ENCODE measurements at regions of chrX and their contacts with region 1.

Region 1: GRCh38 chrX:154490414-154491083 is at the start of gene SLC10A3:
- DNase-seq: peak; percentile 74
- H3K4me3 ChIP-seq: peak within 1 kb of the TSS; percentile 67
- H3K27ac ChIP-seq: peak within 1 kb of the TSS; percentile 93
- H3K27me3 ChIP-seq: no peaks in the 10 kb centered on the region
- CTCF ChIP-seq: no peak
- polyA plus RNA-seq, gene SLC10A3: 10.1 and 13.8 TPM in 2 replicates

Region 2: DNA sequence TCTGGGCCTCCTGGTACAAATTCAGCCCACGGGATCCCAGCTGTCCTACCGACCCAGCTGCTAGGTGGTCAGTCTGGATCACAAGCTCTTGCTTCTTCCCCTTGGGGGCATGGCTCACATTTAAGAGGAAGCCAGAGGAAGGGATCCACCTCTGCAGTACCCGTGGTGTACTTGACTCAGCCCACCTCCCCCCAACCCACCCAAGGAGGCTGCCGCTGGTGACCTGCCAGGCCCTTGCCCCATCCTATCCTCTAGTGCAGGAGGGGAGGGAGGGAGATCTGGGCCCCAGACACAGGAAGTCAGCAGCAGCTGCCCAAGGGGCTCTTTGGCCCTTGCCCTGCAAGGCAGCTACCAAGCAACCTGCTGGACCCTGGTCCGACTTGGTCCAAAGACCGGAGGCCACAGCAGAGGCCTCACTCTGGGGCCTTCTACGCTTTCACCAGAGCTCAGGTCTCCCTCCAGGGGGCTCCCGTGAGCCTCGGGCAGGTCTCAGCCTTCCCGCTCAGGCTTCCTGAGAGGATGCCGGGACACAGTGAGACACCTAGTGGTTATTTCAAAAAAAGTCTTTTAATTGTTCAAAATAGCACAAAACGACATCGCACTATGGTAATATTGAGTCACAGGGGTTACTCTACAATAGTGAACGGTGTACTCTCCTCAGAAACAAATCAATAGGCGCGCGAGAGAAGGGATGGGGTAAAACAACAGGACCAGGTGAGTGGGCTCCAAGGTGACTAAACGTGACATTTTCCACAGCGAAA is 543.4 kb before region 1 on chrX:
- CTCF ChIA-PET with region 1: no interaction called
- POLR2A ChIA-PET with region 1: no interaction called
- DNase-seq: peak; percentile 41
- H3K4me3 ChIP-seq: no peak overlapping the region
- H3K27ac ChIP-seq: no peak overlapping the region
- H3K27me3 ChIP-seq: no peaks in the 10 kb centered on the region
- CTCF ChIP-seq: peak; percentile 89

Region 3: GRCh38 chrX:154478728-154479622 is 11.6 kb before region 1 on chrX and contains the start of gene LAGE3:
- CTCF ChIA-PET with region 1: no interaction called
- POLR2A ChIA-PET with region 1: interaction called, 11 read pairs
- DNase-seq: peak; percentile 69
- H3K4me3 ChIP-seq: peak within 1 kb of the TSS; percentile 61
- H3K27ac ChIP-seq: no peak within 1 kb of the TSS
- H3K27me3 ChIP-seq: no peaks in the 10 kb centered on the region
- CTCF ChIP-seq: no peak
- polyA plus RNA-seq, gene LAGE3: 9.3 and 13.2 TPM in 2 replicates

Region 4: GRCh38 chrX:154515878-154516655 is 25.5 kb after region 1 on chrX and contains the start of gene FAM3A:
- CTCF ChIA-PET with region 1: no interaction called
- POLR2A ChIA-PET with region 1: interaction called, 12 read pairs
- DNase-seq: peak; percentile 73
- H3K4me3 ChIP-seq: peak within 1 kb of the TSS; percentile 68
- H3K27ac ChIP-seq: peak within 1 kb of the TSS; percentile 81
- H3K27me3 ChIP-seq: no peaks in the 10 kb centered on the region
- CTCF ChIP-seq: no peak
- polyA plus RNA-seq, gene FAM3A: 15.5 and 19.5 TPM in 2 replicates

Region 5: DNA sequence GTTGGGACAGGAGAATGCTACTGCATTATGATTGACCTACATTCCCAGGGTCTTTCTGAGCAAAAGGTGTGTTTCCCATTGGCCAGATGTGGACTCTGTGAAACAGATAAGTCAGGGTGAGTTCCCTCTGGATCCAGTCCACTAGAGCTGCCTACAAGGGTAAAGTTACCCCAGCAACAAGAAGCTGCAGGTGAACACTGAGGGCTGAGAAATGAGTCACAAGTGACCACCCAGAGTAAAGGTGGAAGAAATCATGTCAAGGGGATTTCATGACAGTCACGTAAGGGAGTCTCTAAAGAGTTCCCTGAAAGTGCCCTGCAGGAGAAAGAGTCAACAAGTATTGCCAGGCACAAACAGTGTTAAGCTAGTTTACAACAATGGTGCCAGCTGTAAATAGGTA is 411.9 kb after region 1 on chrX:
- CTCF ChIA-PET with region 1: no interaction called
- POLR2A ChIA-PET with region 1: no interaction called
- DNase-seq: no peak
- H3K4me3 ChIP-seq: no peak overlapping the region
- H3K27ac ChIP-seq: no peak overlapping the region
- H3K27me3 ChIP-seq: no peaks in the 10 kb centered on the region
- CTCF ChIP-seq: no peak